HepG2 (cell line): ENCODE measurements at regions of chr11 and their contacts with region 1.

Region 1: GRCh38 chr11:10899121-10899830 is 41.4 kb upstream of the ZBED5 start:
- DNase-seq: no peak
- ATAC-seq: peak; percentile 63
- H3K4me3 ChIP-seq: peak overlapping the region in 1 of 3 experiments; percentile 45; a peak in 2 of 6 replicates
- H3K27ac ChIP-seq: peak overlapping the region; percentile 11
- H3K4me1 ChIP-seq: peaks cover 23% of the 10 kb centered on the region
- H3K27me3 ChIP-seq: no peaks in the 10 kb centered on the region
- CTCF ChIP-seq: no peak
- EP300 ChIP-seq: no peak
- POLR2A ChIP-seq: no peak
- RAD21 ChIP-seq: no peak

Region 2: GRCh38 chr11:10857709-10858438 is 41.4 kb before region 1 on chr11 and contains the start of gene ZBED5:
- CTCF ChIA-PET with region 1: no interaction called
- POLR2A ChIA-PET with region 1: interaction called, 13 read pairs
- in situ Hi-C with region 1: no loop called
- intact Hi-C with region 1: no loop called
- DNase-seq: peak; percentile 92
- ATAC-seq: peak; percentile 97
- H3K4me3 ChIP-seq: peak within 1 kb of the TSS; percentile 81 to 90 (median 87)
- H3K27ac ChIP-seq: peak within 1 kb of the TSS; percentile 92
- H3K4me1 ChIP-seq: peaks cover 22% of the 10 kb centered on the region
- H3K27me3 ChIP-seq: no peaks in the 10 kb centered on the region; a peak in 1 of 5 replicates
- CTCF ChIP-seq: no peak; the same call in none of the 2 replicates
- EP300 ChIP-seq: no peak
- POLR2A ChIP-seq: peak; percentile 84 to 92
- RAD21 ChIP-seq: no peak
- total RNA-seq, gene ZBED5: 11.7 and 18.2 TPM in 2 replicates

Region 3: DNA sequence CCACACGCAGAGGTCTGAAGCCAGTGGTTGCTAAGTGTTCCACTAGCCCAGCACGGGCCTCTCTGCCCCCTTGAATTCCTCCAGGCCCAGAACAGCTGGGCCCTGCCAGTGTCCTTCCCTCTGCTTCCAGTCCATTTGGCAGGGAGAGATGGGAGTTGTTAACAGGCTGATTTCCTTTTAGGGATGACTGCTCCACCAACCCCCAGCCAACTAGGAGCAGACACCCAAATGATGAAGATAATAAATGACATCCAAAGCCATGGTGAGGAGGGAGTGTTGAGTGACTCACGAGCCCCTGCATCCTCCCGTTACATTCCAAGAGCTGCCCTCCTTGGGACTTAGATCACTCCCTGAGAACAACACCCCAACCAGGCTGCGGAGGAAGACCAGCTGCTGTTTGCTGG is 1498.7 kb after region 1 on chr11:
- CTCF ChIA-PET with region 1: no interaction called
- POLR2A ChIA-PET with region 1: no interaction called
- in situ Hi-C with region 1: no loop called
- intact Hi-C with region 1: no loop called
- DNase-seq: no peak
- ATAC-seq: no peak
- H3K4me3 ChIP-seq: no peak overlapping the region
- H3K27ac ChIP-seq: no peak overlapping the region
- H3K4me1 ChIP-seq: peaks cover 2% of the 10 kb centered on the region; the same call in 1 of the 2 replicates
- H3K27me3 ChIP-seq: no peaks in the 10 kb centered on the region
- CTCF ChIP-seq: no peak
- EP300 ChIP-seq: no peak
- POLR2A ChIP-seq: no peak
- RAD21 ChIP-seq: no peak